CD8-positive, alpha-beta T cell (primary cell): ENCODE measurements at regions of chr4 and their contacts with region 1.

Region 1: GRCh38 chr4:15882675-15883086 is 55.9 kb downstream of the FGFBP1 start:
- DNase-seq: peak in 8 of 9 experiments; percentile 16 to 81 (median 49)
- ATAC-seq: peak; percentile 63
- H3K4me3 ChIP-seq: no peak overlapping the region
- H3K4me3 Mint-ChIP-seq: no peak overlapping the region
- H3K27ac ChIP-seq: no peak overlapping the region
- H3K27ac Mint-ChIP-seq: no peak overlapping the region
- H3K4me1 ChIP-seq: no peaks in the 10 kb centered on the region
- H3K4me1 Mint-ChIP-seq: no peaks in the 10 kb centered on the region
- H3K27me3 ChIP-seq: no peaks in the 10 kb centered on the region
- H3K27me3 Mint-ChIP-seq: peaks cover 4% of the 10 kb centered on the region
- CTCF ChIP-seq: peak; percentile 80

Region 2: DNA sequence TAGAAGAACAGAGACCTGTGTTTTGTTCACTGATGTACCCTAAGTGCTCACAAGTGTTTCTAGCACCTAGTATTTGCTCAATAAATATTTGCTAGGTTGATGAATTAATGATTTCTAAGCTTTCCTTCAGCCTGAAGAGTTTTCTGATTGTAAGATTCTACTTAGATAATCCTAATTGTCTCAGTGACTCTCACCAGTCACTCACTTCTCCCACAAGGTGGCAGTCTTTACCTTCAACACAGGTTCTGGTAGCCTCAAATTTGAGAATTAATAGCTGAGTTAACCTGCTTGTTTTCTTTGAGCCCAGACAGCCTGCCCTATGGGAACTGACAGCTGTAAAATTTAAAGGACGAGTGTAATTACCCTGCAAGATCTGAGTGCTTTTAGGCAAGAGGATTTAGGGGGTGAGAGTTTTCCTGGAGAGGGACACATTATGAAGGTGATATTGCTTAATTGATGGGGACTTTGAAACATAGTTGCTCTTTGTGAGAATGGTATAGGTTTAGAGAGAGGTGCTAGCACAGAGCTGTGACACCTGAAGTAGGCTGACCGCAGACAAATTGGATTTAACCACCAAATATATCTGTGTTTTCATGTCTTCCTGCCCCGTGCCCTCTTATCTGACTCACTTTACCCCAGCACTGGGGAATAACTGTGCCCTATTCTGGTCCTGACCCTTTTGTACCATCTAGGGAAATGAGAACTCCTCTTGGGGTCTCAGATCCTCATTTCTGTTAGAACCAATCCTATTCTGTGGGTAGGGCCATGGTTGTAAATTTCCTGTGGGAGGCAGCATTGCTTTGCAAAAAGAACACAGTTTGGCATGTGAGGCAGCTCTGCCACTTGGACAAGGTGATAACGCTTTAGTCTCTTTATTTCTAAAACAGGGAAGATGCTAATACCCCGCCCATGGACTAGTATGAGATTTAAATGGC is 76.8 kb before region 1 on chr4:
- CTCF ChIA-PET with region 1: interaction called, 14 read pairs
- POLR2A ChIA-PET with region 1: no interaction called
- intact Hi-C with region 1: loop called in 1 of 2 experiments (anchors 5 kb)
- DNase-seq: peak in 7 of 9 experiments; percentile 9 to 76 (median 43)
- ATAC-seq: peak; percentile 82
- H3K4me3 ChIP-seq: no peak overlapping the region
- H3K4me3 Mint-ChIP-seq: no peak overlapping the region
- H3K27ac ChIP-seq: no peak overlapping the region
- H3K27ac Mint-ChIP-seq: no peak overlapping the region
- H3K4me1 ChIP-seq: no peaks in the 10 kb centered on the region
- H3K4me1 Mint-ChIP-seq: peaks cover 15% of the 10 kb centered on the region
- H3K27me3 ChIP-seq: no peaks in the 10 kb centered on the region
- H3K27me3 Mint-ChIP-seq: no peaks in the 10 kb centered on the region
- CTCF ChIP-seq: peak; percentile 82

Region 3: GRCh38 chr4:15893962-15894361 is 11.3 kb after region 1 on chr4:
- CTCF ChIA-PET with region 1: interaction called, 14 read pairs
- POLR2A ChIA-PET with region 1: no interaction called
- intact Hi-C with region 1: no loop called
- DNase-seq: no peak
- ATAC-seq: no peak
- H3K4me3 ChIP-seq: no peak overlapping the region
- H3K4me3 Mint-ChIP-seq: no peak overlapping the region
- H3K27ac ChIP-seq: no peak overlapping the region
- H3K27ac Mint-ChIP-seq: no peak overlapping the region
- H3K4me1 ChIP-seq: no peaks in the 10 kb centered on the region
- H3K4me1 Mint-ChIP-seq: no peaks in the 10 kb centered on the region
- H3K27me3 ChIP-seq: no peaks in the 10 kb centered on the region
- H3K27me3 Mint-ChIP-seq: peaks cover 7% of the 10 kb centered on the region
- CTCF ChIP-seq: no peak

Region 4: DNA sequence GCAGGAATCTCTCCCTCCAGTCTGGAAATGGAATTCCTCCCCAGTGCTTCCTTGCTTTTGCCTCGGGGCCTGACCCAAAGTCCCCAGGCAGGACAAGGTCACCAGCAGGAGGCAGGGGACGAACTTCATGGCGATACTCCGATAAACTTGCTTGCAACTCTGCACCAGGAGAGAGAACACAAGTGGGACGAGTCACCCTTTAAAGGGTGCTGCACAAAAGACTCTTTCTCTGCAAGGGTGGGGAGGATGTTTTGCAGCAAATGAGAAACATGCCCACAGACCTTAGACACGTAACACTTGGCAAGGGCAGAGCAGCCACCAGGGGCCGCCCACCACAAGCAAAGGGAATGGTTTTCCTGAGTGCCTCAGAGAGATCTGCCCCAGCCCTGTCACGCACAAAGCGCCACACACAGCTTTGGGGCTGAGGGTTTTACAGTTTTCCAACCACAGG is 80.3 kb after region 1 on chr4 and contains the start of gene FGFBP2:
- CTCF ChIA-PET with region 1: interaction called, 10 read pairs
- POLR2A ChIA-PET with region 1: no interaction called
- intact Hi-C with region 1: no loop called
- DNase-seq: peak; percentile 47 to 91 (median 74)
- ATAC-seq: peak; percentile 84
- H3K4me3 ChIP-seq: peak within 1 kb of the TSS; percentile 26 to 60
- H3K4me3 Mint-ChIP-seq: peak within 1 kb of the TSS; percentile 59
- H3K27ac ChIP-seq: peak within 1 kb of the TSS; percentile 56 to 73
- H3K27ac Mint-ChIP-seq: peak within 1 kb of the TSS; percentile 83
- H3K4me1 ChIP-seq: peaks cover 27% of the 10 kb centered on the region
- H3K4me1 Mint-ChIP-seq: peaks cover 36% of the 10 kb centered on the region
- H3K27me3 ChIP-seq: no peaks in the 10 kb centered on the region
- H3K27me3 Mint-ChIP-seq: no peaks in the 10 kb centered on the region
- CTCF ChIP-seq: peak; percentile 38
- total RNA-seq, gene FGFBP2: 8.2 to 9.9 TPM

Region 5: DNA sequence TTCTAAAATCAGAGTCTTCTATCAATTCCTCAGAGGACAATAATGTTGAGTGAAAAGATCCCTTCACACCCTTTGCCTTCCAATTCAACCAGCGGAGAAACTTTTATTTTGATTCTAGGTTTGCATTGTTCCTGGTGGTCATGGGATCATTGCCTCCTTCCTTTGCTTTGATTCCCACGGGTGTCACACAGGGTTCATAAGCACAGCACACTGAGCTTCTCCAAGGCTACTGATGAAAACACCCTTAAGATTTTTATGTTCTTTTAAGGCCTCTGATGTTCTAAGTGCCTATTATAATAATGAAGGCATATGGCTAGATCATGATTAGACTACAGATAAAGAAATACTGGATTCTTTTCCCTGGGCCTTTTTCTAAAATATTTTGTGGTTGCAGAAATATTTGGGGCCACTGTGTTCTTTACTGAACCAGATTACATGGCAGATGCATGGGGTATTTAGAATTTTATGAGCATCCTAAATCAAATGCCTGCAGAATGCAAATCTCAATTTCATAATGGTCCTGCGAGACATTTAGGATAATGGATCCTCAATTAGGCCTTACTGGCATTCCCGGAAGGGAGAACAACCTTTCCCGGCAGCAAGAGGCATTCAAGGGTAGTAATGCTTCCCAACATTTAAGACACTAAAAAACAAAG is 124.2 kb after region 1 on chr4:
- CTCF ChIA-PET with region 1: interaction called, 112 read pairs
- POLR2A ChIA-PET with region 1: interaction called, 3 read pairs
- intact Hi-C with region 1: no loop called
- DNase-seq: no peak
- ATAC-seq: no peak
- H3K4me3 ChIP-seq: no peak overlapping the region
- H3K4me3 Mint-ChIP-seq: no peak overlapping the region
- H3K27ac ChIP-seq: no peak overlapping the region
- H3K27ac Mint-ChIP-seq: no peak overlapping the region
- H3K4me1 ChIP-seq: no peaks in the 10 kb centered on the region
- H3K4me1 Mint-ChIP-seq: no peaks in the 10 kb centered on the region
- H3K27me3 ChIP-seq: no peaks in the 10 kb centered on the region
- H3K27me3 Mint-ChIP-seq: peaks cover 6% of the 10 kb centered on the region
- CTCF ChIP-seq: no peak

Region 6: GRCh38 chr4:16377887-16378286 is 495.2 kb after region 1 on chr4:
- CTCF ChIA-PET with region 1: no interaction called
- POLR2A ChIA-PET with region 1: no interaction called
- intact Hi-C with region 1: no loop called
- DNase-seq: no peak
- ATAC-seq: no peak
- H3K4me3 ChIP-seq: no peak overlapping the region
- H3K4me3 Mint-ChIP-seq: no peak overlapping the region
- H3K27ac ChIP-seq: no peak overlapping the region
- H3K27ac Mint-ChIP-seq: no peak overlapping the region
- H3K4me1 ChIP-seq: no peaks in the 10 kb centered on the region
- H3K4me1 Mint-ChIP-seq: no peaks in the 10 kb centered on the region
- H3K27me3 ChIP-seq: no peaks in the 10 kb centered on the region
- H3K27me3 Mint-ChIP-seq: no peaks in the 10 kb centered on the region
- CTCF ChIP-seq: no peak